Mammary epithelial cell (primary cell): ENCODE measurements at regions of chr2 and their contacts with region 1.

Region 1: GRCh38 chr2:209638346-209638745 is 133.3 kb upstream of the UNC80 start:
- DNase-seq: peak; percentile 73
- H3K4me3 ChIP-seq: no peak overlapping the region
- H3K27ac ChIP-seq: no peak overlapping the region
- H3K4me1 ChIP-seq: peaks cover 48% of the 10 kb centered on the region
- H3K27me3 ChIP-seq: no peaks in the 10 kb centered on the region
- CTCF ChIP-seq: no peak

Region 2: DNA sequence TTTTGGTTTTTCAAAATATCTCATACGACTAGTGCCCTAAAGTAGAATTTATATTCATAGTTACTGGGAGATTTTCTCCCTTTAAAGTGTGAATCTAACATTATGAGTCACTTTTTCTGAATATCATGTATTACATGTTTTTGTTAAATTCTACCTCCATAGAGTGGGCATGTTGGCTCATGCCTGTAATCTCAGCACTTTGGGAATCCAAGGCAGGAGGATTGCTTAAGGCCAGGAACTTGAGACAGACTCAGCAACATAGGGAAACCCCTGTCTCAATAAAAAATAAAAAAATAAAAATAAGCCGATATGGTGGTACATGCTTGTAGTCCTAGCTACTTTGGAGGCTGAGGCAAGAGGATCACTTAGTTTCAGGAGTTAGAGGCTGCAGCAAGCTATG is 88.0 kb after region 1 on chr2:
- CTCF ChIA-PET with region 1: no interaction called
- dilution Hi-C with region 1: no loop called
- in situ Hi-C with region 1: no loop called
- intact Hi-C with region 1: loop called (anchors 5 kb)
- DNase-seq: peak; percentile 90
- H3K4me3 ChIP-seq: no peak overlapping the region
- H3K27ac ChIP-seq: peak overlapping the region; percentile 47
- H3K4me1 ChIP-seq: peaks cover 14% of the 10 kb centered on the region
- H3K27me3 ChIP-seq: no peaks in the 10 kb centered on the region
- CTCF ChIP-seq: no peak